Natural killer cell (primary cell): ENCODE measurements at regions of chr14 and their contacts with region 1.

Region 1: GRCh38 chr14:67856814-67857213 is 37.2 kb downstream of the RAD51B start:
- DNase-seq: peak in 1 of 2 donors; percentile 26
- ATAC-seq: peak; percentile 60 to 97 (median 67)
- H3K4me3 ChIP-seq: no peak overlapping the region
- H3K4me3 Mint-ChIP-seq: peak overlapping the region; percentile 82
- H3K27ac ChIP-seq: no peak overlapping the region
- H3K27ac Mint-ChIP-seq: peak overlapping the region in 1 of 2 donors; percentile 78
- H3K4me1 ChIP-seq: peaks cover 27% of the 10 kb centered on the region
- H3K4me1 Mint-ChIP-seq: peaks cover 44 to 47% of the 10 kb centered on the region in 2 donors
- H3K27me3 ChIP-seq: no peaks in the 10 kb centered on the region
- H3K27me3 Mint-ChIP-seq: peaks cover 42 to 46% of the 10 kb centered on the region in 2 donors
- CTCF ChIP-seq: no peak

Region 2: GRCh38 chr14:67502881-67503699 is 353.7 kb before region 1 on chr14:
- intact Hi-C with region 1: no loop called
- DNase-seq: no peak
- ATAC-seq: no peak
- H3K4me3 ChIP-seq: no peak overlapping the region
- H3K4me3 Mint-ChIP-seq: no peak overlapping the region
- H3K27ac ChIP-seq: no peak overlapping the region
- H3K27ac Mint-ChIP-seq: no peak overlapping the region
- H3K4me1 ChIP-seq: no peaks in the 10 kb centered on the region
- H3K4me1 Mint-ChIP-seq: peaks cover 0 to 1% of the 10 kb centered on the region in 2 donors
- H3K27me3 ChIP-seq: no peaks in the 10 kb centered on the region
- H3K27me3 Mint-ChIP-seq: no peaks in the 10 kb centered on the region
- CTCF ChIP-seq: no peak

Region 3: DNA sequence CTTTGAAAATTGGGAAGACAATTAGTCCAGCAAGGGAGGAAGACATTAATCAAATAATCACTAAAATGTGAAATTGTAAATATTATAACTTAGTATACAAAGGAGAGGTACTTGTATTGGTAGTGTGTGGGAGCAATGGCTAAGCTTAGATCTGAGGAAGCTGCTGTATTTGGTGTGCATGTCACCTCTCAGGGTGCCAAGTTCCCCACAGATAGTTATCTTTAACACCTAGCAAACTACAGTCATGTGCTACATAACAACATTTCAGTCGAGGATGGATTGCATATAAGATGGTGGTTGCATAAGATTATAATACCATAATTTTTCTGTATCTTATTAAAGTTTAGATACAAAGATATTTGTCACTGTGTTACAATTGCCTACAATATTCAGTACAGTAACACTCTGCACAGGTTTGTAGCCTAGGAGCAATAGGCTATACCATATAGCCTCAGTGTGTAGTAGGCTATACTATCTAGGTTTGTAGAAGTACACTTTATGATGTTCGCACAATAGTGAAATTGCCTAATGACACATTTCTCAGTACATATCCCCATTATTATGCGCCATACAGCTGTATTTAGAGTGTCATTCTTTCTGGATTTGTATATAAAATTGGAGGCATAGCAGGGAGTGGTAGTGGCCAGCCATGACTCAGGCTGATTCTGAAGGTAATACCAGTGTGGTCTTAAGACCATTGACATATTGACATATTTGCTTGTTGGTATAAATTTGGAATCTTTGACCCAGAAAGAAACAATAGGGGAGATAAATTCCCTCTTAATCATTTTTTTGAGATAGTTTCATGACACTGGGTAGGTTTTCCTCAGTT is 18.6 kb after region 1 on chr14:
- intact Hi-C with region 1: loop called (anchors 2 kb)
- DNase-seq: peak in 1 of 2 donors; percentile 59
- ATAC-seq: peak; percentile 93 to 100 (median 98)
- H3K4me3 ChIP-seq: no peak overlapping the region
- H3K4me3 Mint-ChIP-seq: no peak overlapping the region
- H3K27ac ChIP-seq: peak overlapping the region; percentile 17
- H3K27ac Mint-ChIP-seq: no peak overlapping the region
- H3K4me1 ChIP-seq: peaks cover 11% of the 10 kb centered on the region
- H3K4me1 Mint-ChIP-seq: peaks cover 1 to 2% of the 10 kb centered on the region in 2 donors
- H3K27me3 ChIP-seq: no peaks in the 10 kb centered on the region
- H3K27me3 Mint-ChIP-seq: no peaks in the 10 kb centered on the region
- CTCF ChIP-seq: no peak